Activated B cell treated with CpG ODN at 0.5 μM for 24 hours (primary cell): ENCODE measurements at regions of chr3 and their contacts with region 1.

Region 1: DNA sequence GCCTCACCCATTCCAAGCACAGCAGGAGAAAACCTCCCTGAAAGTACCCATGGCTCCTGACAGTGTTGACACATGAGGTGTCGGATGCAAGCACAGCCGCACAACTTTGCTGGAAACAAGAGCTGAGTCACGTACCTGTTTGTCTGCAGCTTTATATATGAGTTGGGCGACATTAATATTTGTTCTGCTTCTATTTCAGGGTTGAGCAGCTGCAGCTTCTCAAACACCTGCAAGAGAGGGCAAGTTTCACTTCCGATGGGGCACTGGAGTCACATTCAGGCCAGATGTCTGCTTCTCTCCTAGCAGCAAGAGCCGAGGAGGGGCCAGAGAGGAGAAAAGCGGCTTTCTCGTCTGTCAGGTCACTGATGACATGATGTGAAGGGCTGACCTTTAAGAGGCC is 88.0 kb downstream of the NUP210 start:
- DNase-seq: peak; percentile 48
- ATAC-seq: peak; percentile 91
- H3K4me3 Mint-ChIP-seq: peak overlapping the region; percentile 56
- H3K27ac Mint-ChIP-seq: peak overlapping the region; percentile 88
- H3K4me1 Mint-ChIP-seq: peaks cover 39% of the 10 kb centered on the region
- H3K27me3 Mint-ChIP-seq: no peaks in the 10 kb centered on the region
- CTCF ChIP-seq: no peak

Region 2: GRCh38 chr3:13005301-13005700 is 326.9 kb before region 1 on chr3:
- CTCF ChIA-PET with region 1: no interaction called
- POLR2A ChIA-PET with region 1: no interaction called
- intact Hi-C with region 1: no loop called
- DNase-seq: no peak
- ATAC-seq: no peak
- H3K4me3 Mint-ChIP-seq: no peak overlapping the region
- H3K27ac Mint-ChIP-seq: peak overlapping the region; percentile 89
- H3K4me1 Mint-ChIP-seq: peaks cover 98% of the 10 kb centered on the region
- H3K27me3 Mint-ChIP-seq: no peaks in the 10 kb centered on the region
- CTCF ChIP-seq: no peak

Region 3: DNA sequence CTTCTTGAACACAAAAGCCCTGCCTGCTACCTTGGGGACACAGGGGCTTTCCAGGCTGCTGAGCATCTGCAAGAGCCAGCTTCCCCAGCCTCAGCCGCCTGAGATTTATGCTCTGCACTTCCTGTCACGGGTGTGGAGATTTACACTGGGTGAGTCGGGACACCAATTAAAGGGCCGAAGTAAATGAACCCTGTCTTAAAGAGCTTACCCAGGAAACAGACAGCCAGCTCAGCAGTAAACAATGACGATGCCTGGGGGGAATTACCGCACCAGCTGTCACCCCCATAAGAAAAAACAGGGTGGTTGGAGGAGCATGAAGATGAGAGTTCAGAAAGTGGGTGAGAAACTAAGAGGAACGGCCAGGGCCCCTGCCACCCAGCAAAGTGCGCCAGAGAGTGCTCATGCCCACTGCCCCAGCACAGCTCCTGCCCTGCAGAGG is 221.5 kb before region 1 on chr3:
- CTCF ChIA-PET with region 1: no interaction called
- POLR2A ChIA-PET with region 1: interaction called, 11 read pairs
- intact Hi-C with region 1: loop called (anchors 1 kb)
- DNase-seq: peak; percentile 62
- ATAC-seq: peak; percentile 90
- H3K4me3 Mint-ChIP-seq: peak overlapping the region; percentile 73
- H3K27ac Mint-ChIP-seq: peak overlapping the region; percentile 96
- H3K4me1 Mint-ChIP-seq: peaks cover 60% of the 10 kb centered on the region
- H3K27me3 Mint-ChIP-seq: no peaks in the 10 kb centered on the region
- CTCF ChIP-seq: no peak

Region 4: DNA sequence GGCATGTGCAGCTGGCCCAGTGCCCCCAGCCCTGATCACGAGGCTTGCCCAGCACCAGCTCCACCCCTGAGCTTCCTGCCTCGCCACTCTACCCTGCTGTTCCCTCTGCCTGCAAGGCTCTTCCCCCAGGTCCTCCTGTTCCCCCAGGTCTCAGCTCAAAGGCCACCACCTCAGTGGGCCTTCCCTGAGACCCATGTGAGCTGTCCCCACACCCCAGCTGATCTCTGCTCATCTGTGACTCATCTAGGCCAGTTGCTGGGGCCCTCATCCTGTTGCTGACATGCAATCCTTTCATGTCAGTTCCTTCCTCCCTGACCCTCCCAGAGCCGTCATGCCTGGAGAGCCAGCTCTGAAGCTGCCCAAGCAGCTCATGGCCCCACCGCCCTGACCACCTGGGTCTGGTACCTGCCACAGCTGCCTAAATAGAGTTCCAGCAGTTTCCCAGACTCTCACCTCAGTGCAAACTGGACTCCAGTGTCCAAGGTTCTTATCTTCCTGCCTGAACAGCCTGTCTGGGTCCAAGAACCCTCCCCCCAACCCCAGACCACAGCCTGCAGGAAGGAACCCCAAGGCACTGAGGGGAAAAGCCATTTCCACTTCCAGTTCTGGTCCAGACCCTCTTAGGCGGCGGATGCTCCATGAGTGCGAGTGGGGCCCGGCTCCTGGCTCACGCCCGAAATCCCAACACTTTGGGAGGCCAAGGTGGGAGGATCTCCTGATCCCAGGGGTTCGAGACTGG is 142.3 kb before region 1 on chr3:
- CTCF ChIA-PET with region 1: no interaction called
- POLR2A ChIA-PET with region 1: no interaction called
- intact Hi-C with region 1: no loop called
- DNase-seq: no peak
- ATAC-seq: no peak
- H3K4me3 Mint-ChIP-seq: no peak overlapping the region
- H3K27ac Mint-ChIP-seq: no peak overlapping the region
- H3K4me1 Mint-ChIP-seq: peaks cover 5% of the 10 kb centered on the region
- H3K27me3 Mint-ChIP-seq: peaks cover 31% of the 10 kb centered on the region
- CTCF ChIP-seq: no peak

Region 5: DNA sequence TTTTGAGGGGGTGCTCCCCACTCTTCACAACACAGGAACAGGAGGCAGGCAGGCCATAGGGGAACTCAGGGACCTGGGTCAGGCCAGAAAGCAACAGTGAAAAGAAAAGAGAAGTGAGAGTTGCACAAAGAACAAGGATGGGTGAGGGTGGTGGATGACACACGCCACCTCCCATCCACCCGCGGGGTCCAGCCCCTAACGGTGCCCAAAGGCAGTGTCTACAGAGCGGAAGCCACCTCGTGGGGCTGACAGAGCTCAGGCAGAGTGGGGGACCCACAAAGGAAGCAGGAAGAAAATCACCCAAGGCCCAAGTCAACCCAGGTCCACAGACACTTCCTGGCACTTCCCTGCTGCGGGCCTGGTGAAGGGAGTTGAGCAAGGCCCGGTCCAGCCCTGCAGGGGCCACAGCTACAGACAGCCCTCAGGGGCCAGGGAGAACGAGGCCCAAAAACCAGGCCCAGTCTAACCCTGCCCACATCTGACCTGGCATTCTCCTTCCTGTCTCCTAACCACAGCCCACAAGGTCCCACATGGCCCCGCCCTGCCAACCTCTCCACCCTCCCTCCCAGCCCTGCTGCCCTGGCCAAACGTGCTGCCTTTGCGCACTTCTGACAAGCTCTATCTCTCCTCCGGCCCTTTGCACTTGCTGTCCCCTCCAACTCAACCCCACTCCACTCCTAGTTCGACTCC is 82.0 kb after region 1 on chr3:
- CTCF ChIA-PET with region 1: no interaction called
- POLR2A ChIA-PET with region 1: interaction called, 7 read pairs
- intact Hi-C with region 1: loop called (anchors 1 kb)
- DNase-seq: peak; percentile 76
- ATAC-seq: peak; percentile 93
- H3K4me3 Mint-ChIP-seq: peak overlapping the region; percentile 79
- H3K27ac Mint-ChIP-seq: peak overlapping the region; percentile 98
- H3K4me1 Mint-ChIP-seq: peaks cover 67% of the 10 kb centered on the region
- H3K27me3 Mint-ChIP-seq: no peaks in the 10 kb centered on the region
- CTCF ChIP-seq: no peak

Region 6: GRCh38 chr3:13419505-13420044 is 87.4 kb after region 1 on chr3:
- CTCF ChIA-PET with region 1: no interaction called
- POLR2A ChIA-PET with region 1: interaction called, 4 read pairs
- intact Hi-C with region 1: loop called (anchors 1 kb)
- DNase-seq: peak; percentile 69
- ATAC-seq: peak; percentile 59
- H3K4me3 Mint-ChIP-seq: peak overlapping the region; percentile 91
- H3K27ac Mint-ChIP-seq: peak overlapping the region; percentile 98
- H3K4me1 Mint-ChIP-seq: peaks cover 62% of the 10 kb centered on the region
- H3K27me3 Mint-ChIP-seq: no peaks in the 10 kb centered on the region
- CTCF ChIP-seq: no peak